ENCODE measurements at regions of chr21 and their contacts with region 1.

Region 1: DNA sequence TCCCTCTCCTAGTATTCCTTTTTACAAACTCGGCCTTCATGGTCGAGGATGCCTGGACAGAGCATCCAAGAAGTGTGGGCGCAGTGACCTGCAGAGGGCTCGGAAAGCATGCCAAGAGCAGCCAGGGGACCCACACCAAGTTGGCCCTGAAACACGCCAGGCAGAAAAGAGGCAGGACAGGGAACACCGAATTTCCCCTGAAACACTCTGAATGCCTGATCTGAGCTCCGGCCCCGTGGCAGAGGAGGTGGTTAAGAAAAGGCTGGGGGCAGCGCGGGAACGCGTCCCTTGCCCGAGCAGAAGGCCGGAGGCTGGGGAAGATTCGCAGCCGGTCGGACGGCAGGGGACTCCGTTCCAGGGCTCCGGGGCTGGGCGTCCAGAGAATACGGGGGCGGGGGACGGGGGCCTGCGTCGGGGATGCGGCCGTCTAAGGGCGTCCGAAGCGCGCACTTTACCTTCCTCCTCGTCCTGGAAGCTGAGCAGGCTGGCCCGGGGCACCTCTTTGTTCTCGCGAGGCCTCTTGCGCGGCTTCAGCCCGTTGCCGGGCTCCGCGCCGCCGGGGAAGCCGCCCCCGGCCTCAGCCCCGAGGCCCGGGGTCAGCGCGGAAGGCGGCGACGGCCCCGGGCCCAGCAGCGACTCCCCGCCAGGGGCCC is 558 bp downstream of the PAXBP1 start:
- DNase-seq: peak in 1 of 9 donors; percentile 42
- ATAC-seq: peak; percentile 36
- H3K4me3 ChIP-seq: peak overlapping the region; percentile 77
- H3K4me3 Mint-ChIP-seq: peak overlapping the region; percentile 90 to 97 (median 94)
- H3K27ac ChIP-seq: peak overlapping the region; percentile 79
- H3K27ac Mint-ChIP-seq: peak overlapping the region; percentile 90 to 99 (median 95)
- H3K4me1 ChIP-seq: peaks cover 29 to 31% of the 10 kb centered on the region in 2 donors
- H3K4me1 Mint-ChIP-seq: peaks cover 43 to 75% (median 66%) of the 10 kb centered on the region in 7 donors
- H3K27me3 ChIP-seq: no peaks in the 10 kb centered on the region
- H3K27me3 Mint-ChIP-seq: peaks cover 0 to 5% (median 0%) of the 10 kb centered on the region in 5 donors

Region 2: GRCh38 chr21:32412162-32413014 is 358.6 kb before region 1 on chr21 and contains the start of gene EVA1C:
- CTCF ChIA-PET with region 1: no interaction called
- POLR2A ChIA-PET with region 1: no interaction called
- intact Hi-C with region 1: loop called (anchors 1 to 2 kb)
- DNase-seq: peak; percentile 56 to 73 (median 70)
- ATAC-seq: peak; percentile 81
- H3K4me3 ChIP-seq: peak within 1 kb of the TSS; percentile 76
- H3K4me3 Mint-ChIP-seq: peak within 1 kb of the TSS; percentile 88 to 97 (median 94)
- H3K27ac ChIP-seq: peak within 1 kb of the TSS; percentile 85
- H3K27ac Mint-ChIP-seq: peak within 1 kb of the TSS; percentile 89 to 95 (median 93)
- H3K4me1 ChIP-seq: peaks cover 14 to 29% of the 10 kb centered on the region in 2 donors
- H3K4me1 Mint-ChIP-seq: peaks cover 22 to 57% (median 28%) of the 10 kb centered on the region in 7 donors
- H3K27me3 ChIP-seq: no peaks in the 10 kb centered on the region
- H3K27me3 Mint-ChIP-seq: peaks cover 0 to 7% (median 0%) of the 10 kb centered on the region in 5 donors
- total RNA-seq, gene EVA1C: 2.6 to 16.3 (median 12.3) TPM

Region 3: GRCh38 chr21:32735524-32735923 is 35.5 kb before region 1 on chr21:
- CTCF ChIA-PET with region 1: interaction called, 6 read pairs
- POLR2A ChIA-PET with region 1: interaction called, 24 read pairs
- intact Hi-C with region 1: no loop called
- DNase-seq: no peak
- ATAC-seq: no peak
- H3K4me3 ChIP-seq: no peak overlapping the region
- H3K4me3 Mint-ChIP-seq: no peak overlapping the region
- H3K27ac ChIP-seq: no peak overlapping the region
- H3K27ac Mint-ChIP-seq: peak overlapping the region in 5 of 9 donors; percentile 1 to 76 (median 67)
- H3K4me1 ChIP-seq: peaks cover 0 to 25% of the 10 kb centered on the region in 2 donors
- H3K4me1 Mint-ChIP-seq: peaks cover 8 to 51% (median 39%) of the 10 kb centered on the region in 7 donors
- H3K27me3 ChIP-seq: no peaks in the 10 kb centered on the region
- H3K27me3 Mint-ChIP-seq: no peaks in the 10 kb centered on the region

Region 4: GRCh38 chr21:32929633-32930038 is 158.6 kb after region 1 on chr21:
- CTCF ChIA-PET with region 1: no interaction called
- POLR2A ChIA-PET with region 1: interaction called, 3 read pairs
- intact Hi-C with region 1: loop called in 1 of 2 experiments (anchors 1 kb)
- DNase-seq: no peak
- ATAC-seq: no peak
- H3K4me3 ChIP-seq: no peak overlapping the region
- H3K4me3 Mint-ChIP-seq: peak overlapping the region in 2 of 10 donors; percentile 4 to 37
- H3K27ac ChIP-seq: no peak overlapping the region
- H3K27ac Mint-ChIP-seq: peak overlapping the region in 3 of 9 donors; percentile 21 to 41 (median 34)
- H3K4me1 ChIP-seq: peaks cover 33 to 44% of the 10 kb centered on the region in 2 donors
- H3K4me1 Mint-ChIP-seq: peaks cover 14 to 43% (median 28%) of the 10 kb centered on the region in 7 donors
- H3K27me3 ChIP-seq: no peaks in the 10 kb centered on the region
- H3K27me3 Mint-ChIP-seq: peaks cover 0 to 2% (median 0%) of the 10 kb centered on the region in 5 donors

Region 5: GRCh38 chr21:33403779-33404585 is 633.0 kb after region 1 on chr21:
- CTCF ChIA-PET with region 1: no interaction called
- POLR2A ChIA-PET with region 1: interaction called, 5 read pairs
- intact Hi-C with region 1: loop called in 1 of 2 experiments (anchors 10 kb)
- DNase-seq: peak in 7 of 9 donors; percentile 21 to 43 (median 29)
- ATAC-seq: peak; percentile 30
- H3K4me3 ChIP-seq: peak overlapping the region; percentile 77
- H3K4me3 Mint-ChIP-seq: peak overlapping the region; percentile 87 to 99 (median 97)
- H3K27ac ChIP-seq: peak overlapping the region; percentile 84
- H3K27ac Mint-ChIP-seq: peak overlapping the region; percentile 4 to 98 (median 94)
- H3K4me1 ChIP-seq: peaks cover 16 to 25% of the 10 kb centered on the region in 2 donors
- H3K4me1 Mint-ChIP-seq: peaks cover 25 to 60% (median 54%) of the 10 kb centered on the region in 7 donors
- H3K27me3 ChIP-seq: no peaks in the 10 kb centered on the region
- H3K27me3 Mint-ChIP-seq: peaks cover 0 to 63% (median 0%) of the 10 kb centered on the region in 5 donors

Region 6: DNA sequence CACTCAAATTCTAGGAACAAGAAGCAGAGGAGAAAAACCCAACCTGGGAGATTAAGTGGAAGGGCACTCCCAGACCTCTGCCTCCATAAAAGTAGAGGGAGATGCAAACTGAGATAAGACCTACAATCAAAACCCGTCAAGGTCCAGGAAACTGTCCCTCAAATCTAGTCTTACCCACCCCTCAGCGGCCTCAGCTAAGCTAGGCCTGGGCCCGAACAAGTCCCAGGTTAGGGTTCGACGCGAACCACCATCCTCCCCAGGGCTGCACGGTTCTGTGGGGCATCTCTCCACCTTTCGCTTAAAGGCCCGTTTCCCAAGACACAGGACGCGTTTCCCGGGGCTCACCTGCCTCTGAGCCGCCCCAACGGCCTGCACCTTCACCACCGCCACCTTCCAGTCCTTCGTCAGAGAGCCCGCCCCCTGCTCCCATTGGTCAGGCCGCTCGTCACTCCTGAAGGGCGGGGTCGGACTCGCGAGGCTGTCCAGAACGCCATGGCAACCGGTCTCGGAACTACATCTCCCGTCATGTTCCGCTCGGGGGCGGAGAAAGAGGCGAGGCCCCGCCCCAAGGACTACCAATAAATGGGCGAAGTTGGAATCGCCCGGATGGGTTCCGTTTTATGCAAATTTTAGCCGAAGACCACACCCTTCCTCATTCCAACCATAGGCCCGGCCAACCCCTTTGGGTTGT is 870.5 kb after region 1 on chr21 and contains the start of gene CRYZL1:
- CTCF ChIA-PET with region 1: no interaction called
- POLR2A ChIA-PET with region 1: no interaction called
- intact Hi-C with region 1: loop called (anchors 1 to 2 kb)
- DNase-seq: peak; percentile 96 to 100 (median 100)
- ATAC-seq: peak; percentile 89
- H3K4me3 ChIP-seq: peak within 1 kb of the TSS; percentile 97
- H3K4me3 Mint-ChIP-seq: peak within 1 kb of the TSS; percentile 83 to 99 (median 93)
- H3K27ac ChIP-seq: peak within 1 kb of the TSS; percentile 75
- H3K27ac Mint-ChIP-seq: peak within 1 kb of the TSS; percentile 85 to 100 (median 94)
- H3K4me1 ChIP-seq: peaks cover 4 to 7% of the 10 kb centered on the region in 2 donors
- H3K4me1 Mint-ChIP-seq: peaks cover 19 to 50% (median 37%) of the 10 kb centered on the region in 7 donors
- H3K27me3 ChIP-seq: no peaks in the 10 kb centered on the region
- H3K27me3 Mint-ChIP-seq: peaks cover 9 to 29% (median 15%) of the 10 kb centered on the region in 5 donors
- total RNA-seq, gene CRYZL1: 34.6 to 75.5 (median 40.4) TPM

Measured in naive thymus-derived CD4-positive, alpha-beta T cell (primary cell).